ENCODE measurements at regions of chr1 and their contacts with region 1.

Region 1: DNA sequence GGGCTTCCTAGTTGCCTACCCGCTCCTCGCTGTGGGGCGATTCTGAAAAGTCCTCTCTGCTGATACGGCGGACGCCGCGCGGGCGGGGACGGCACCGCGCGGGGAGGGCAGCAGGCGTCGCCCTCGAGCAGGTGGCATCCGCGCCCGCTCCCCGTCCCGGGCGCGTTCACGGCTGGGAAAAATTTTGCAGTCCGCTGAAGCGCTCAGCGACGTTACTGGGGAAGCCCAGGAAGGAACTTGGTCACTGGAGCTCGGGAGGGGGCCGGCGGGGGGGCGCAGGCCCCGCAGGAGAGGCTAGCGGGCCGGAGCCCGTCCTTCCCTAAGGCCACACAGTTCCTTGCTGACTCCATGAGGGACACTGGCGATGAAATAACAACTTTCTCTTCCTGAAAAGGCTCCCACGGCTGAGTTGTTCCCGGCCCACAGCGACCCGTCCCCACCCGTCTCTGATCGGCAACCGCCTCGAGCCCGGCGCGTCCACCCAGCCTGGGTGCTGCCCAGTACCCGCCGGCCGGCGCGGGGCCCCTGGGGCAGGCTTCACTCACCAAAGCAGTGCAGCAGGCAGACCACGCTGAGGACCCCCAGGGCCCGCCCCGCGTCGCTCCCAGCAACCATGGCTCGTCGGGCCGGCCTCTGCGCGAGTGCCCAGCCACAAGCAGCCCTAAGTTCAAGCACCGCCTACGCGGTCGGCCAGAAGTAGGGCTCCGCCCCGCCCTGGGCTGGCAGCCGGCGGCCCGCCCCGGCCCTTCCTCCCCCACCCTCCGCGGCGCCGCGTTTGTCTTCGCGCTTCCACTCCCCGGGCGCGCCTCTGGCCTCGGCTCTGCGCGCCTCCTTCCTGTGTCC is at the start of gene CD58:
- H3K4me3 ChIP-seq: peak within 1 kb of the TSS; percentile 80
- H3K27ac ChIP-seq: peak within 1 kb of the TSS; percentile 56
- H3K4me1 ChIP-seq: no peaks in the 10 kb centered on the region; the same call in 1 of the 2 replicates
- CTCF ChIP-seq: peak; percentile 67

Region 2: GRCh38 chr1:116586741-116587143 is 16.2 kb after region 1 on chr1:
- CTCF ChIA-PET with region 1: interaction called, 11 read pairs
- POLR2A ChIA-PET with region 1: no interaction called
- H3K4me3 ChIP-seq: no peak overlapping the region
- H3K27ac ChIP-seq: no peak overlapping the region
- H3K4me1 ChIP-seq: no peaks in the 10 kb centered on the region
- CTCF ChIP-seq: no peak